ENCODE measurements at regions of chr9 and their contacts with region 1.

Region 1: GRCh38 chr9:34591248-34591916 is 1.9 kb upstream of the CNTFR start:
- DNase-seq: peak; percentile 71 to 97 (median 92)

Region 2: DNA sequence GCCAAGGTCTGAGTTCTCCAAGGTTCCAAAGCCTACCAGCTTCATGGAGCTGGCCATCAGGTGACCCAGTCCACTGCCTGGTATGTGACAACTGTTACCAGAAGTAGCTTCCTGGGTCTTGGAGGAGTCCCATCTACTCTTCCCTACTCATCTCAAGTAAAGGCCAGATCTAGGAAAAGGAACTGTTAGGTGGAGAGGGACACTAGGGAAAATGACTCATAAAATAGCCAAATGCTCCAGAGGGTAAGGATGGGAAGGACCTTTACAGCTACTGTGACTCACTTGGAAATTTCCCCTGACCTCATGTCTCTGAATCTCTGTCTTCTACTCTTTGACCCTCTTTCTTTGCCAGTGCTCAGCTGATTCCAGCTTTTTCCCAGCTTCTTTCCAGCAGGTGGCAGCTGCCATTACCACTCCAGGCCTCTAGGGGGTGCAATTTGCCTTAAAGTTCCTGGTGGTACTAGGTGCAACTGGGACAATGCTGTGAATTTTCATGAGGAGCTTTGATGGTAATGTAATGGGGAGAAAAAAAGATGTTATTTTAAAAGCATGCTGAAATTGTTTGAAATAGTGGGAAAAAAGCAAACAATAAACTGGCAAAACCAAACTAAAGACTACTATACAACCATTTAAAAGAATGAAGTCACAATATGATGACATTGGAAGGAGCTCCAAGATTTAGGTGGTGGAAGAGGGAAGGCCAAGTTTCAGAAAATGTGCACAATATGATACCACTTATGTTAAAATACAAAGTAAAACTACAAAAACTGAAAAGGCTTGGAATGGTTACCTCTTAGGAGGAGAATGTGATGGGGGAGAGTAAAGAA is 187.6 kb before region 1 on chr9:
- intact Hi-C with region 1: loop called (anchors 10 kb)
- DNase-seq: peak; percentile 50 to 93 (median 83)

Region 3: GRCh38 chr9:34546834-34547827 is 44.3 kb before region 1 on chr9:
- intact Hi-C with region 1: loop called (anchors 2 kb)
- DNase-seq: peak in 41 of 42 donors; percentile 67 to 95 (median 82)

Region 4: GRCh38 chr9:35385042-35385441 is 793.7 kb after region 1 on chr9:
- intact Hi-C with region 1: no loop called
- DNase-seq: peak in 20 of 42 donors; percentile 5 to 68 (median 26)